Naive thymus-derived CD4-positive, alpha-beta T cell (primary cell): ENCODE measurements at regions of chr4 and their contacts with region 1.

Region 1: DNA sequence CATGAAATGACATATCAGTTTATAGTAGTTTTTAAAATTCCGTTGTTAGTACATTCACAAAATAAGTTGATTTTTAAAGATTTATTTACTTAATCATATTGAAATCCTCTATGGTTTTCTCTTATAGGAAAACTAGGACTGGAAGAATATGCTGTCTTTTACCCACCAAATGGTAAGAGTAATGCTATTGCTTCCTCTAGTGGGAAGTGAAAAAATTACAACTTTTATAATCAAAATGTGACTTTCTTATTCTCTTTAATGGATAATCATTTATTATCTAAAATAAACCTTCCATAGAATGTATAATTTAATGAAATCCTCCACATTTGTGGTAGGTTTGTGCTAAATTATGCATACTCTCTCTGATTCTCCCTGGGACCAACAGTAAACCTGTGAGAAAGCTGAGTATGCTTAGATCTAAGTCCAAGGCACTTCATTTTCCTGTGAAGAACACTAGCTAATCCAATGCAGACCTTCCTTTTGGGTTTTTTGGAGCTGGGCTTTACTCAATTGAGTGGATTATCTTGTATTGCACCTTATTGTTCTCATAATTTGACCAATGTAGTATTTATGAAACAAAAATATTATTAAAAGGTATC is 136.2 kb downstream of the TBC1D19 start:
- DNase-seq: no peak
- ATAC-seq: no peak
- H3K4me3 ChIP-seq: no peak overlapping the region
- H3K4me3 Mint-ChIP-seq: no peak overlapping the region
- H3K27ac ChIP-seq: no peak overlapping the region
- H3K27ac Mint-ChIP-seq: no peak overlapping the region
- H3K4me1 ChIP-seq: peaks cover 5 to 9% of the 10 kb centered on the region in 2 donors
- H3K4me1 Mint-ChIP-seq: peaks cover 0 to 23% (median 13%) of the 10 kb centered on the region in 7 donors
- H3K27me3 ChIP-seq: no peaks in the 10 kb centered on the region
- H3K27me3 Mint-ChIP-seq: no peaks in the 10 kb centered on the region

Region 2: GRCh38 chr4:25743971-25744370 is 976.1 kb before region 1 on chr4:
- CTCF ChIA-PET with region 1: no interaction called
- POLR2A ChIA-PET with region 1: no interaction called
- intact Hi-C with region 1: no loop called
- DNase-seq: no peak
- ATAC-seq: no peak
- H3K4me3 ChIP-seq: no peak overlapping the region
- H3K4me3 Mint-ChIP-seq: no peak overlapping the region
- H3K27ac ChIP-seq: no peak overlapping the region
- H3K27ac Mint-ChIP-seq: no peak overlapping the region
- H3K4me1 ChIP-seq: no peaks in the 10 kb centered on the region
- H3K4me1 Mint-ChIP-seq: no peaks in the 10 kb centered on the region
- H3K27me3 ChIP-seq: no peaks in the 10 kb centered on the region
- H3K27me3 Mint-ChIP-seq: no peaks in the 10 kb centered on the region

Region 3: GRCh38 chr4:26081795-26082498 is 638.1 kb before region 1 on chr4:
- CTCF ChIA-PET with region 1: interaction called, 3 read pairs
- POLR2A ChIA-PET with region 1: no interaction called
- intact Hi-C with region 1: loop called in 1 of 2 experiments (anchors 5 kb)
- DNase-seq: peak in 5 of 9 donors; percentile 16 to 29 (median 22)
- ATAC-seq: peak; percentile 66
- H3K4me3 ChIP-seq: no peak overlapping the region
- H3K4me3 Mint-ChIP-seq: peak overlapping the region in 1 of 10 donors; percentile 49
- H3K27ac ChIP-seq: no peak overlapping the region
- H3K27ac Mint-ChIP-seq: peak overlapping the region in 1 of 9 donors; percentile 73
- H3K4me1 ChIP-seq: no peaks in the 10 kb centered on the region
- H3K4me1 Mint-ChIP-seq: peaks cover 0 to 65% (median 6%) of the 10 kb centered on the region in 7 donors
- H3K27me3 ChIP-seq: no peaks in the 10 kb centered on the region
- H3K27me3 Mint-ChIP-seq: peaks cover 0 to 38% (median 7%) of the 10 kb centered on the region in 5 donors

Region 4: GRCh38 chr4:26459054-26459755 is 260.8 kb before region 1 on chr4:
- CTCF ChIA-PET with region 1: interaction called, 3 read pairs
- POLR2A ChIA-PET with region 1: no interaction called
- intact Hi-C with region 1: loop called in 1 of 2 experiments (anchors 1 kb)
- DNase-seq: peak in 7 of 9 donors; percentile 15 to 62 (median 51)
- ATAC-seq: peak; percentile 62
- H3K4me3 ChIP-seq: no peak overlapping the region
- H3K4me3 Mint-ChIP-seq: peak overlapping the region in 9 of 10 donors; percentile 21 to 82 (median 61)
- H3K27ac ChIP-seq: no peak overlapping the region
- H3K27ac Mint-ChIP-seq: peak overlapping the region in 5 of 9 donors; percentile 5 to 68 (median 60)
- H3K4me1 ChIP-seq: peaks cover 0 to 16% of the 10 kb centered on the region in 2 donors
- H3K4me1 Mint-ChIP-seq: peaks cover 0 to 30% (median 20%) of the 10 kb centered on the region in 7 donors
- H3K27me3 ChIP-seq: no peaks in the 10 kb centered on the region
- H3K27me3 Mint-ChIP-seq: no peaks in the 10 kb centered on the region

Region 5: DNA sequence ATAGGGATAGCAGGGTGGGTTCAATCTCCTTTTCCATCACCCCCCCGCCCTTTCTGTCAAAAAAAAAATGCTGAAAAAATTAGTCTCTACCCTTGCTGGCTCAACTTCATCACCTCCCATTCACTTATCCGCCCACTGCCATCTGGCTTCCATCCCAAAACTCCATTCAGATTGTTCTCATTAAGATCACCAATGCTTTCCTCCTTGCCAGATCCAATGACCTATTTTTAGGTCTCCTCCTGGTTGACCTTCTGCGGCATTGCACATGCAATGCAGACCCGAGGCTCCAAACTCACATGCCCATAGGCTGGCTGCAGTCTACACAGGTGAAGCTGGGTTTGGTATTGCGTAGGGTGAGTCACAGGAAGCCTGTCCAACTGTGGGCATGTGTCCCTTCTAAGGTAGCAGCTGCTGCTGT is 119.5 kb after region 1 on chr4:
- CTCF ChIA-PET with region 1: no interaction called
- POLR2A ChIA-PET with region 1: no interaction called
- intact Hi-C with region 1: no loop called
- DNase-seq: no peak
- ATAC-seq: no peak
- H3K4me3 ChIP-seq: no peak overlapping the region
- H3K4me3 Mint-ChIP-seq: peak overlapping the region in 2 of 10 donors; percentile 5 to 22
- H3K27ac ChIP-seq: no peak overlapping the region
- H3K27ac Mint-ChIP-seq: peak overlapping the region in 7 of 9 donors; percentile 2 to 89 (median 43)
- H3K4me1 ChIP-seq: no peaks in the 10 kb centered on the region
- H3K4me1 Mint-ChIP-seq: peaks cover 0 to 15% (median 5%) of the 10 kb centered on the region in 7 donors
- H3K27me3 ChIP-seq: no peaks in the 10 kb centered on the region
- H3K27me3 Mint-ChIP-seq: peaks cover 0 to 7% (median 0%) of the 10 kb centered on the region in 5 donors